ENCODE measurements at regions of chr12 and their contacts with region 1.

Region 1: GRCh38 chr12:116703214-116703795 is 34.6 kb downstream of the SPRING1 start:
- DNase-seq: peak in 1 of 2 donors; percentile 70
- H3K4me3 ChIP-seq: no peak overlapping the region
- H3K27ac ChIP-seq: no peak overlapping the region
- H3K4me1 ChIP-seq: no peaks in the 10 kb centered on the region
- H3K27me3 ChIP-seq: no peaks in the 10 kb centered on the region
- CTCF ChIP-seq: peak; percentile 82 to 94 (median 93)

Region 2: DNA sequence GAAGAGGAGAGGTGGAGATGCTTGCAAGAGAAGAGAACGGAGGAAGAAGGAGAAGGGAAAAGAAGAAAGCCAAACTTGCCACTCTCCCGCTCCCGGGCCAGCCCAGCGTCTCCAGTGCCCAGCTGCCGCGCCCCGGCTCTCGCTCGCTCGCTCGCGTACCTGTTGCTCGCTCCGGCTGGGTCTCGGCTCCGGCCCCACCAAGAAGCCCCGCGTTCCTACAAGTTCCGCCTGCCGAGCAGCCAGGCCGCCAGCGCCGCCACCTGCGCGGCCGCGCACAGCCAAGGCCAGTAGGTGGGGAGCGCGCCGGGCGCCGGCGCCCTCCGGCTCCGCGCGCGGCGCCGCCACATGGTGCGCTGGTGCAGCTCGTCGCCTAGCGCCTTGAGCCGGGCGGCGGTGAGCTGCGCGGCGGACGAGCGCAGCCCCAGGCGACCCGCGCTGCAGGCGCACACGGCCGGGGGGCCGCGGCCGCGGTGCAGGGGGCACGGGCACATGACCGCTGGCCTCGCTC is 177.6 kb after region 1 on chr12:
- intact Hi-C with region 1: loop called (anchors 1 kb)
- DNase-seq: no peak
- H3K4me3 ChIP-seq: peak overlapping the region; percentile 55 to 58
- H3K27ac ChIP-seq: no peak overlapping the region
- H3K4me1 ChIP-seq: peaks cover 10 to 24% of the 10 kb centered on the region in 2 donors
- H3K27me3 ChIP-seq: peaks cover 12% of the 10 kb centered on the region
- CTCF ChIP-seq: no peak

Region 3: DNA sequence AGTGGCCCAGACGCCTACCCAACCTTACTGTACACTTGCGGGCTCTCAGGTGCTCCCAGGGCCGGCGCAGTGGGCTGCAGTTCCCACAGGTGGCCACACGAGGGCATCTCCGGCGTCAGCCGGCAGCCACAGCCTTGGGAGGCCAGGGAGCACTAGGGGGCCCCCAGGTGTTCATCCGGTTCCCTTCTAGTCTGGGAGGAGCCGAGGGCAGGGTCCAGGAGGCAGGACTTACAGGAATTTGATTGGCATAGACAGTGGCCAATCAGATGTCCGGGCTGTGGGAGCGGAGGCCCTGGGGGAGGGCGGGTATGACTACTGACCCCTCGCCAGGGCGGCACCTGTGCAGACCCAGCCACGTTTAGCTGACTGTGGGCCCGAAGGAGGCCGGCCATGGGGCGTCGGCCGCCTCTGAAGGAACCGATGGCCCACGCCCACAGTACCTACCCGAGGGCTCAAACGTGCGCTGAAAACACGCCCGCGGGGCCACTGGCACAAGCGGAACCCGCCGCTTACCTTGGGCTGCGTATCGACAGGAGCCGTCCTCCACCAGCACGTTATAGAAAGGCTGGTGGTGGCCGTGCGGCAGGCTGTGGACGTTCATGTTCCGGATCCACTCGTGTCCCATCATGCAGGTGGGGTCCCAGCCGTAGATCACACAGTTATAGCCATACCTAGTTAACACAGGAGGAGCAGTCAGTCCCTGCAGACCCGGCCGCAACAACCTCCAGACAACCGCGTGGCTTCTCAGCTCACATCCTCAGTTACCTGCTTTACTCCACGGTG is 452.2 kb after region 1 on chr12:
- intact Hi-C with region 1: loop called (anchors 10 kb)
- DNase-seq: peak in 1 of 2 donors; percentile 65
- H3K4me3 ChIP-seq: no peak overlapping the region
- H3K27ac ChIP-seq: no peak overlapping the region
- H3K4me1 ChIP-seq: no peaks in the 10 kb centered on the region
- H3K27me3 ChIP-seq: no peaks in the 10 kb centered on the region
- CTCF ChIP-seq: peak; percentile 17 to 70 (median 69)